ENCODE measurements at regions of chr14 and their contacts with region 1.

Region 1: GRCh38 chr14:61644834-61645233 is 50.5 kb upstream of the HIF1A start:
- DNase-seq: no peak
- ATAC-seq: no peak
- H3K4me3 ChIP-seq: no peak overlapping the region
- H3K4me3 Mint-ChIP-seq: no peak overlapping the region
- H3K27ac ChIP-seq: no peak overlapping the region
- H3K27ac Mint-ChIP-seq: no peak overlapping the region
- H3K4me1 ChIP-seq: peaks cover 22% of the 10 kb centered on the region
- H3K4me1 Mint-ChIP-seq: peaks cover 27% of the 10 kb centered on the region
- H3K27me3 ChIP-seq: no peaks in the 10 kb centered on the region
- H3K27me3 Mint-ChIP-seq: no peaks in the 10 kb centered on the region
- CTCF ChIP-seq: no peak

Region 2: DNA sequence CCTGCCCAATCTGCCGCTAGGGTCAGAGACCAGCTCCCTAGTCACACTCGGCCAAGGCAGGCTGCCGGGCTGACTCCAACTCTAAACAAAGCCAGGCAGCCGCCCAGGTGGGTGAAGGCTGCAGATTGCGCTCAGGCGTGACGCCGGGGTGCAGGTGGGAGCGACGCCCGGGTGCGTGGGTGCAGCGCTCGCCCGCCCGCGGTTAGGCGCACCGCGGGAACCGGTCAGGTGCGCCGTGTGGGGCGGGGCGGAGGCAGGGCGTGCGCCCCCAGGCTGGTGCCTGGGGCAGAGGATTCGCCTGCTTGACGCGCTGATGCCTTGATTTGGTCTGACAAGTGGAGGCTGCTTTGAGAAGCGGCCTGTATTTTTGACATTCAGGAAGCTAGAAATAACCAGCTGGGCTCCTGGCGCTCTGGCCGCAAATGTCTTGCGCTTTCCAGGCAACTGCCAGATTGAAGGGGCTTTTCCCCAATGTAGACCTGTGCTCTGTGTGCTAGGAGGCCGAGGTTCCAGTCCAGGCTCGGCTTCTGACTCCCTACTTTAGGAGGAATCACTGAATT is 76.2 kb before region 1 on chr14:
- CTCF ChIA-PET with region 1: no interaction called
- POLR2A ChIA-PET with region 1: no interaction called
- intact Hi-C with region 1: loop called in 1 of 2 experiments (anchors 5 kb)
- DNase-seq: peak; percentile 22 to 77 (median 68)
- ATAC-seq: peak; percentile 73
- H3K4me3 ChIP-seq: peak overlapping the region; percentile 10 to 17
- H3K4me3 Mint-ChIP-seq: peak overlapping the region; percentile 71
- H3K27ac ChIP-seq: no peak overlapping the region
- H3K27ac Mint-ChIP-seq: peak overlapping the region; percentile 86
- H3K4me1 ChIP-seq: peaks cover 30% of the 10 kb centered on the region
- H3K4me1 Mint-ChIP-seq: peaks cover 45% of the 10 kb centered on the region
- H3K27me3 ChIP-seq: no peaks in the 10 kb centered on the region
- H3K27me3 Mint-ChIP-seq: no peaks in the 10 kb centered on the region
- CTCF ChIP-seq: no peak

Region 3: GRCh38 chr14:61609191-61609843 is 35.5 kb before region 1 on chr14:
- CTCF ChIA-PET with region 1: no interaction called
- POLR2A ChIA-PET with region 1: no interaction called
- intact Hi-C with region 1: loop called in 1 of 2 experiments (anchors 5 kb)
- DNase-seq: no peak
- ATAC-seq: no peak
- H3K4me3 ChIP-seq: no peak overlapping the region
- H3K4me3 Mint-ChIP-seq: no peak overlapping the region
- H3K27ac ChIP-seq: no peak overlapping the region
- H3K27ac Mint-ChIP-seq: no peak overlapping the region
- H3K4me1 ChIP-seq: no peaks in the 10 kb centered on the region
- H3K4me1 Mint-ChIP-seq: peaks cover 9% of the 10 kb centered on the region
- H3K27me3 ChIP-seq: no peaks in the 10 kb centered on the region
- H3K27me3 Mint-ChIP-seq: no peaks in the 10 kb centered on the region
- CTCF ChIP-seq: no peak

Region 4: DNA sequence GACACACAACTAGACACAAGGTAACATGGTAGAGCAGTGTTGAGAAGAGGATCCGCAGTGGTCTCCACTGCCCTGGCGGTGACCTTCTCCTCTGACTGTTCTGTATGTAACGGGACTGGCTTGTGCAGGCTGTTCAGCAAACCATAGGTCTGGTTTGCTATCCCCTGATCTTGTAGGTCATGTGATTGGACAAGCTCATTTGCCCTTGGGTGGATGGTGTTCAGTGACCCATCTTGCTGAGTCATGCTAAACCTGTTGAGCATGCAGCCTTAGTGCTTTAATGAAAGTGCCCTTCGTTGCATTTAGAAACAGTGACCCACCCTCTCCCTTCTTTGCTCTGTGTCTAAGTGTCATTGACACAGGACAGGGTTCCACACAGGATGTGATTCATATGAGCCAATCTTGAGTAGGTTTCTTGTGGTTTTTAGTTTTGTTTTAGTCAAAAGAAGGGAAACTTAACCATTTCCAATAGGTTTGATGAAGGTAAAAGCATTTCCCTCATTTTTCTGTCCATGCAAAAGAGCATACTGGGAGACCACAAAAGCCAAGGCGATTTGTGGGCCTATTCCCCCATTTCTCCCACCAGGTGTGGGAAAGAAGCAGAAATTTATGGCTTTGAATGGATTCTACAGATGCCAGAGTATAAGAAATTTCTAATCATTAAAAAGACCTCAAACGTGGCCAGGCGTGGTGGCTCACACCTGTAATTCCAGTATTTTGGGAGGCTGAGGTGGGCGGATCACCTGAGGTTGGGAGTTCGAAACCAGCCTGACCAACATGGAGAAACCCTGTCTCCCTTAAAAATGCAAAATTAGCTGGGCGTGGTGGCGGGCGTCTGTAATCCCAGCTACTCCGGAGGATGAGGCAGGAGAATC is 17.8 kb after region 1 on chr14:
- CTCF ChIA-PET with region 1: no interaction called
- POLR2A ChIA-PET with region 1: interaction called, 3 read pairs
- intact Hi-C with region 1: loop called in 1 of 2 experiments (anchors 1 kb)
- DNase-seq: peak; percentile 14 to 89 (median 48)
- ATAC-seq: peak; percentile 86
- H3K4me3 ChIP-seq: peak overlapping the region; percentile 2 to 32
- H3K4me3 Mint-ChIP-seq: peak overlapping the region; percentile 76
- H3K27ac ChIP-seq: peak overlapping the region; percentile 10 to 74
- H3K27ac Mint-ChIP-seq: peak overlapping the region; percentile 93
- H3K4me1 ChIP-seq: peaks cover 55% of the 10 kb centered on the region
- H3K4me1 Mint-ChIP-seq: peaks cover 56% of the 10 kb centered on the region
- H3K27me3 ChIP-seq: no peaks in the 10 kb centered on the region
- H3K27me3 Mint-ChIP-seq: no peaks in the 10 kb centered on the region
- CTCF ChIP-seq: no peak

Measured in CD8-positive, alpha-beta T cell (primary cell).